A549 (cell line): ENCODE measurements at regions of chr10 and their contacts with region 1.

Region 1: GRCh38 chr10:60816628-60817397 is 38.5 kb downstream of the CDK1 start:
- DNase-seq: peak; percentile 84
- ATAC-seq: peak; percentile 94 to 95
- H3K4me3 ChIP-seq: no peak overlapping the region
- H3K27ac ChIP-seq: peak overlapping the region; percentile 2 to 33; a peak in 4 of 6 replicates
- H3K4me1 ChIP-seq: peaks cover 13% of the 10 kb centered on the region
- CTCF ChIP-seq: peak; percentile 89
- EP300 ChIP-seq: no peak
- POLR2A ChIP-seq: no peak
- RAD21 ChIP-seq: peak; percentile 93 to 96

Region 2: DNA sequence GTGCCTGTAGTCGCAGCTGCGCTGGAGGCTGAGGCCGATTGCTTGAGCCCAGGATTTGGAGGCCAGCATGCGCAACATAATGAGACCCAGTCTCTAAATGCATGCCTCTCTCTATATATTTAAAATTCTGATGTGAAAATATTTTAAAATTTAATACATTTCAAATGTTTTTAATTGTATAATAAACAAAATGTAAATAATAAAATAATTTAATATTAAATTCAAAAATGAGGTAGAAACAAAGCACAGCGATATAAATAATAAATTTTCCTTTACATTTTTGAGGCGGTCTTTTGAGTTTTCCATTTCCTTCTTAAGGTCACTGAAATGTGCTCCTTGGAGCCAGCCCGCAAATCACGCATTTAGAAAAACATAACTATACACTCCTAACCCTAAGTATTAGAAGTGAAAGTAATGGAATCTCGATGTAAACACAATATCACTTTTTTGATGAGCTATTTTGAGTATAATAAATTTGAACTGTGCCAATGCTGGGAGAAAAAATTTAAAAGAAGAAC is 39.1 kb before region 1 on chr10:
- CTCF ChIA-PET with region 1: no interaction called
- POLR2A ChIA-PET with region 1: no interaction called
- DNase-seq: no peak
- ATAC-seq: peak in 1 of 2 experiments; percentile 25; a peak in 3 of 6 replicates
- H3K4me3 ChIP-seq: peak overlapping the region; percentile 74
- H3K27ac ChIP-seq: peak overlapping the region; percentile 80 to 85
- H3K4me1 ChIP-seq: peaks cover 30% of the 10 kb centered on the region
- CTCF ChIP-seq: no peak
- EP300 ChIP-seq: no peak
- POLR2A ChIP-seq: no peak
- RAD21 ChIP-seq: no peak

Region 3: DNA sequence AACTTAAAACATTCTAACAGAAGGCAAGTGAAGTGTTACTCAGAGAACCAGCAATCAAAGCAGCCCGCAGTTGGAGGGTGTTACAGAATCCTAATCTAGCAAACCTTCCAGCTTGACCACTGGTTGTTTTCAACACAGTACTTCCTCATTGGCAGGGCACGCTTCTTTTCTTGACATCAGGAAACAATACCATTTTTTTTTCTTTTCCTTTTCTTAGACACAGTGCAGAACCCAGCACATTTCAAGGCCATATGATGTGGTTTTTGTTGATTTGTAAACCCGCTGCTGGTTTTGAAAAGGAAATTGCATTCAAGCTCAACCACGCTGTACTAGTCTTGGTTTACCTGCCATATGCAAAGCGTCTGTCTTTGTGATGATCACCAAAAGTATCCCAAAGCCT is 93.7 kb after region 1 on chr10:
- CTCF ChIA-PET with region 1: no interaction called
- POLR2A ChIA-PET with region 1: no interaction called
- DNase-seq: no peak
- ATAC-seq: no peak
- H3K4me3 ChIP-seq: no peak overlapping the region
- H3K27ac ChIP-seq: no peak overlapping the region
- H3K4me1 ChIP-seq: peaks cover 11% of the 10 kb centered on the region; the same call in 2 of the 3 replicates
- CTCF ChIP-seq: no peak
- EP300 ChIP-seq: no peak
- POLR2A ChIP-seq: no peak
- RAD21 ChIP-seq: no peak

Region 4: GRCh38 chr10:60964257-60965235 is 147.7 kb after region 1 on chr10:
- CTCF ChIA-PET with region 1: interaction called, 14 read pairs
- POLR2A ChIA-PET with region 1: no interaction called
- DNase-seq: peak; percentile 65 to 83
- ATAC-seq: peak; percentile 89
- H3K4me3 ChIP-seq: no peak overlapping the region
- H3K27ac ChIP-seq: peak overlapping the region; percentile 69 to 73
- H3K4me1 ChIP-seq: peaks cover 33% of the 10 kb centered on the region
- CTCF ChIP-seq: peak; percentile 91
- EP300 ChIP-seq: 0 out of 5 replicates have a peak, but pooled peaks of 1 of the 2 experiments have one; percentile 12
- POLR2A ChIP-seq: no peak
- RAD21 ChIP-seq: peak; percentile 90 to 91

Region 5: GRCh38 chr10:61188691-61189090 is 371.9 kb after region 1 on chr10:
- CTCF ChIA-PET with region 1: interaction called, 14 read pairs
- POLR2A ChIA-PET with region 1: no interaction called
- DNase-seq: no peak
- ATAC-seq: no peak
- H3K4me3 ChIP-seq: no peak overlapping the region
- H3K27ac ChIP-seq: no peak overlapping the region
- H3K4me1 ChIP-seq: no peaks in the 10 kb centered on the region
- CTCF ChIP-seq: no peak
- EP300 ChIP-seq: no peak
- POLR2A ChIP-seq: no peak
- RAD21 ChIP-seq: no peak